Naive thymus-derived CD4-positive, alpha-beta T cell (primary cell): ENCODE measurements at regions of chr3 and their contacts with region 1.

Region 1: DNA sequence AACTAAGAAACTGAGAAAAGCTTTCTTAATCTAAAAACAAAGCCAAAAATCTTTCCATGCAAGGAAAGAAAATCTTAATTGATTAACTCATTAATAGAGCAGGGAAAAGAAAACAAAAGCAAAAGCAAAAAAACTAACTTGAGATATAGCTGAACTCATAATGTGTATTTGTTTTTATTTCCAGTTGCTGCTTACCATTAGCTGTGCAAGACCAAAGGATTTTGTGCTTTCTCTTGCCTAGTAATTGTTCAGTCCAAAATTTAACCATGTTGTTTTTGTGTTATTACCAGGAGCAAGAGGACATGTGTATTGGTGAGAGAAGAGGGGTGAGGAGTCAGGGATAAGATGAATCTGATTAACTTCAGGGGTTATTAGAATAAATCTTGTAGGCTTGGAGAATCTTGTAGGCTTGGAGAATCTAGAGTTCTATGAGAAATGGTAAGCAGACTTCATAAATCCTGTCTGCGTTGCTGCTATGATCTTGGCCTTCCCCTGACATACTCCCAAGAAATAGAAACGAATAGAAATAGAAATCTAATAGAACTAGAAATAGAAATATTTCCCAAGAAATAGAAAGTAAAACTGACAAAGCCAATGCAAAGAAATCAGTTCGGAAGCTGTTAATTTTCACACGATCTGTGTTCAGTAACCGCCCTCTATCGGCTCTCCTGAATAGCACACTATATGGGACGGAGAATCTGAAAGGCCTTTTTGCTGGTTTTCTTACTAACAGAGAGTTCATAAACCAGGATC is 72.6 kb upstream of the TNFSF10 start:
- DNase-seq: peak in 7 of 9 donors; percentile 38 to 75 (median 64)
- ATAC-seq: peak; percentile 61
- H3K4me3 ChIP-seq: peak overlapping the region; percentile 44
- H3K4me3 Mint-ChIP-seq: peak overlapping the region; percentile 39 to 92 (median 86)
- H3K27ac ChIP-seq: peak overlapping the region; percentile 70
- H3K27ac Mint-ChIP-seq: peak overlapping the region; percentile 53 to 96 (median 89)
- H3K4me1 ChIP-seq: peaks cover 35% of the 10 kb centered on the region in 2 donors
- H3K4me1 Mint-ChIP-seq: peaks cover 43 to 67% (median 58%) of the 10 kb centered on the region in 7 donors
- H3K27me3 ChIP-seq: no peaks in the 10 kb centered on the region
- H3K27me3 Mint-ChIP-seq: no peaks in the 10 kb centered on the region

Region 2: GRCh38 chr3:170908235-170909116 is 1687.3 kb before region 1 on chr3 and contains the start of gene EIF5A2:
- CTCF ChIA-PET with region 1: no interaction called
- POLR2A ChIA-PET with region 1: no interaction called
- intact Hi-C with region 1: loop called in 1 of 2 experiments (anchors 10 kb)
- DNase-seq: peak; percentile 87 to 97 (median 94)
- ATAC-seq: peak; percentile 98
- H3K4me3 ChIP-seq: peak within 1 kb of the TSS; percentile 50
- H3K4me3 Mint-ChIP-seq: peak within 1 kb of the TSS; percentile 90 to 98 (median 96)
- H3K27ac ChIP-seq: peak within 1 kb of the TSS; percentile 68
- H3K27ac Mint-ChIP-seq: peak within 1 kb of the TSS; percentile 89 to 96 (median 94)
- H3K4me1 ChIP-seq: peaks cover 15 to 16% of the 10 kb centered on the region in 2 donors
- H3K4me1 Mint-ChIP-seq: peaks cover 0 to 31% (median 22%) of the 10 kb centered on the region in 7 donors
- H3K27me3 ChIP-seq: no peaks in the 10 kb centered on the region
- H3K27me3 Mint-ChIP-seq: peaks cover 0 to 19% (median 0%) of the 10 kb centered on the region in 5 donors
- total RNA-seq, gene EIF5A2: 5.5 to 9.8 (median 7.4) TPM

Region 3: GRCh38 chr3:172341482-172342059 is 254.2 kb before region 1 on chr3:
- CTCF ChIA-PET with region 1: no interaction called
- POLR2A ChIA-PET with region 1: no interaction called
- intact Hi-C with region 1: loop called in 1 of 2 experiments (anchors 5 kb)
- DNase-seq: peak in 7 of 9 donors; percentile 30 to 73 (median 67)
- ATAC-seq: peak; percentile 85
- H3K4me3 ChIP-seq: no peak overlapping the region
- H3K4me3 Mint-ChIP-seq: no peak overlapping the region
- H3K27ac ChIP-seq: no peak overlapping the region
- H3K27ac Mint-ChIP-seq: no peak overlapping the region
- H3K4me1 ChIP-seq: no peaks in the 10 kb centered on the region
- H3K4me1 Mint-ChIP-seq: peaks cover 0 to 2% (median 0%) of the 10 kb centered on the region in 7 donors
- H3K27me3 ChIP-seq: no peaks in the 10 kb centered on the region
- H3K27me3 Mint-ChIP-seq: no peaks in the 10 kb centered on the region

Region 4: DNA sequence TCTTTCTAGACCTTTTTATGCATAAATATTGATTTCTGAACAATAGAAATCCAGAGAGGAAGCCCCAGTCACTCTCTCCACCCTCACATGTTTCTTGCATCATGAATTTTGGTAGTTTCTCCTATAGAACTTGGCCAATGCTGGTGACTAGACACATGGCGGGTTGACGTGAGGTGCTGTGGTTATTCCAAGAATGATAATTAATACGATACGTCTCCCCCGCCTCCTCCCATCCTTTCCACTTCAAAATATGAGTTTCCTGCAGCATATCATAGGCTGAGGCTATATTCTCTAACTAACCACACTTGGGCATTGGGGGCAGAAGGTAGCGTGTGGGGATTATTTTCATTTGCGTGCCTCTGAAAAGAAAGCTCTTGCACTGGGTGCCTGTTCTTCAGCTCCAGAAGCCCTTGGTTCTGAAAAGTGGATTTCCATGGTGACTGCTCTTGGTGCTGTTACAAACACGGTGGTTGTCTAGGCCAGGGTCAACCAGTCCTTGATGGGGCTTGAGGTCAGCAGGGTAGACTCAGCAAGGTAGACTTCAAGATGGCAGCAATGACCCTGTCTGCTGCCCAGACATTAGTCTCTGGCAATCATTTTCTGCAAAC is 77.9 kb before region 1 on chr3:
- CTCF ChIA-PET with region 1: interaction called, 17 read pairs
- POLR2A ChIA-PET with region 1: interaction called, 54 read pairs
- intact Hi-C with region 1: loop called (anchors 1 kb)
- DNase-seq: peak in 3 of 9 donors; percentile 29 to 52 (median 36)
- ATAC-seq: peak; percentile 36
- H3K4me3 ChIP-seq: peak overlapping the region; percentile 41
- H3K4me3 Mint-ChIP-seq: peak overlapping the region; percentile 65 to 100 (median 85)
- H3K27ac ChIP-seq: peak overlapping the region; percentile 72
- H3K27ac Mint-ChIP-seq: peak overlapping the region; percentile 86 to 100 (median 93)
- H3K4me1 ChIP-seq: peaks cover 60 to 66% of the 10 kb centered on the region in 2 donors
- H3K4me1 Mint-ChIP-seq: peaks cover 62 to 86% (median 83%) of the 10 kb centered on the region in 7 donors
- H3K27me3 ChIP-seq: no peaks in the 10 kb centered on the region
- H3K27me3 Mint-ChIP-seq: no peaks in the 10 kb centered on the region

Region 5: GRCh38 chr3:172550347-172550943 is 45.4 kb before region 1 on chr3:
- CTCF ChIA-PET with region 1: interaction called, 3 read pairs
- POLR2A ChIA-PET with region 1: no interaction called
- intact Hi-C with region 1: loop called in 1 of 2 experiments (anchors 1 kb)
- DNase-seq: peak in 1 of 9 donors; percentile 69
- ATAC-seq: peak; percentile 82
- H3K4me3 ChIP-seq: no peak overlapping the region
- H3K4me3 Mint-ChIP-seq: peak overlapping the region in 1 of 10 donors; percentile 6
- H3K27ac ChIP-seq: no peak overlapping the region
- H3K27ac Mint-ChIP-seq: peak overlapping the region in 1 of 9 donors; percentile 80
- H3K4me1 ChIP-seq: peaks cover 0 to 16% of the 10 kb centered on the region in 2 donors
- H3K4me1 Mint-ChIP-seq: peaks cover 19 to 62% (median 39%) of the 10 kb centered on the region in 7 donors
- H3K27me3 ChIP-seq: no peaks in the 10 kb centered on the region
- H3K27me3 Mint-ChIP-seq: no peaks in the 10 kb centered on the region

Region 6: GRCh38 chr3:172616031-172616461 is 20.2 kb after region 1 on chr3:
- CTCF ChIA-PET with region 1: interaction called, 5 read pairs
- POLR2A ChIA-PET with region 1: no interaction called
- intact Hi-C with region 1: loop called in 1 of 2 experiments (anchors 1 kb)
- DNase-seq: peak in 1 of 9 donors; percentile 29
- ATAC-seq: no peak
- H3K4me3 ChIP-seq: no peak overlapping the region
- H3K4me3 Mint-ChIP-seq: peak overlapping the region in 9 of 10 donors; percentile 49 to 82 (median 71)
- H3K27ac ChIP-seq: no peak overlapping the region
- H3K27ac Mint-ChIP-seq: peak overlapping the region; percentile 34 to 90 (median 72)
- H3K4me1 ChIP-seq: peaks cover 0 to 8% of the 10 kb centered on the region in 2 donors
- H3K4me1 Mint-ChIP-seq: peaks cover 10 to 30% (median 19%) of the 10 kb centered on the region in 7 donors
- H3K27me3 ChIP-seq: no peaks in the 10 kb centered on the region
- H3K27me3 Mint-ChIP-seq: no peaks in the 10 kb centered on the region

Region 7: GRCh38 chr3:172673210-172673679 is 77.4 kb after region 1 on chr3:
- CTCF ChIA-PET with region 1: interaction called, 3 read pairs
- POLR2A ChIA-PET with region 1: no interaction called
- intact Hi-C with region 1: loop called in 1 of 2 experiments (anchors 2 kb)
- DNase-seq: peak; percentile 10 to 61 (median 27)
- ATAC-seq: peak; percentile 70
- H3K4me3 ChIP-seq: no peak overlapping the region
- H3K4me3 Mint-ChIP-seq: no peak overlapping the region
- H3K27ac ChIP-seq: no peak overlapping the region
- H3K27ac Mint-ChIP-seq: no peak overlapping the region
- H3K4me1 ChIP-seq: no peaks in the 10 kb centered on the region
- H3K4me1 Mint-ChIP-seq: peaks cover 0 to 21% (median 2%) of the 10 kb centered on the region in 7 donors
- H3K27me3 ChIP-seq: no peaks in the 10 kb centered on the region
- H3K27me3 Mint-ChIP-seq: no peaks in the 10 kb centered on the region